GM10248 (cell line): ENCODE measurements at regions of chrX and their contacts with region 1.

Region 1: DNA sequence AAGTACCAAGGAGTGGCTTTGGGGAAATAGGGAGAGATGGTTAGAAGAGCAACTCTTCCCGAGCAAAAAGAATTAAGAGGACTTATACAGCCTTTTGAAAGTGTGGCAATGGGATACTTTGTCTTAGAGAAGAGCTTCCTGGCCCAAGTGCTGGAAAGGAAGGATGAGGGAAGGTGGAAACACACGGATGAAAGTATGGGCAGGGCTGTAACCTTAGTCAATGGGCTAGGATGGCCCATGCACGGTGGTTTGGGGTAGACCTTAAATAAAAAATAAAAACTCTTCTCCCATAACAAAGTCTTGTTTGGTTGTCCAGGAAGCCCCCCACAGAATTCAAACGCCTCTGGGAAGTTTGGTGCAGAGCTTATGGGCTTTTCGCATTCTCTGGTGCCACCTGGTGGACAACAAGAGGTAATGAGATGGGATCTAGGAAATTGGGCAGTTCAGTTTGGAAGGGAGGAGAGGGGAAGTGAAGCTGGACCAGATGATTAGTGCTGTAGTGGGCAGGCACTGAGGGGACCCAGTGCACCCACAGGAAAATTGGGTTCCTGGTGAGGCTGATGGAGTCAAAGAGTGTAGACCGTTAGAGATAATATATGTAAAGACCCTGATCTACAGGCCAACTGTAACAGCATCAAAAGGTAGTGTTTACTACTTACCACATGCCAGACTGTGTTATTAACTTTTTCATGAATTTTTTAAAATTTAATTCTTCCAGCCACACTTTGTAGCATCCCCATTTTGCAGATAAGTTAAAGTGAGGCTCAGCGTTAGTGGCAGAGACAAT is 13.8 kb upstream of the ENOX2 start:
- DNase-seq: peak; percentile 48
- CTCF ChIP-seq: peak; percentile 51

Region 2: DNA sequence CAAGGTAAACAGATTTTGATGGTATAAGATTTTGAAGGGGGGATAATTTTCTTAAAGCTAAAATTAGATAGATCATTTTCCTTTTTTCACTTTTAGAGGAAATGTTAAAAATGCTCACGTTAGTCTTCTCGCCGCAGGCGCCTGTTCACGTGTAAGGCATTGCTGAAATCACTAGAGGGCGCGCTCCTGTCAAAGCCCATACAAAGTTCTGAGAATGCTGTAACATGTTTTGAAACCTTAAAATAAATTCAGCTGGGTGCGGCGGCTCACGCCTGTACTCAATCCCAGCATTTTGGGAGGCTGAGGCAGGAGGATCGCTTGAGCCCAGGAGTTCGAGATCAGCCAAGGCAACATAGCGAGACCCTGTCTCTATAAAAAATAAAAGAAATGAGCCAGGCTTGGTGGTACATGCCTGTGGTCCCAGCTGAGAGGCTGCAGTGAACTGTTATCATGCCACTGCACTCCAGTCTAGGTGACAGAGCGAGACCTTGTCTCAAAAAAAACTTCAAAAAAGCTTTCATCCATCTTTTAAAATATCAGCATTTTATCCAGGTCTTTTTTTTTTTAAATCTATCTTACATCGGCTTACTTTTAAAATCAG is 377.0 kb before region 1 on chrX:
- CTCF ChIA-PET with region 1: interaction called, 35 read pairs
- POLR2A ChIA-PET with region 1: no interaction called
- DNase-seq: peak; percentile 37
- CTCF ChIP-seq: peak; percentile 46

Region 3: GRCh38 chrX:130575831-130576389 is 340.9 kb before region 1 on chrX:
- CTCF ChIA-PET with region 1: interaction called, 43 read pairs
- POLR2A ChIA-PET with region 1: no interaction called
- DNase-seq: peak; percentile 38
- CTCF ChIP-seq: peak; percentile 38

Region 4: GRCh38 chrX:130902783-130903613 is 13.8 kb before region 1 on chrX and contains the start of gene ENOX2:
- CTCF ChIA-PET with region 1: interaction called, 23 read pairs
- POLR2A ChIA-PET with region 1: no interaction called
- DNase-seq: peak; percentile 81
- CTCF ChIP-seq: no peak